Body of pancreas (tissue), 4 donors: ENCODE measurements at regions of chr4 and their contacts with region 1.

Region 1: GRCh38 chr4:168924667-168925066 is 85.4 kb downstream of the CBR4 start:
- DNase-seq: no peak
- ATAC-seq: no peak
- H3K4me3 ChIP-seq: no peak overlapping the region
- H3K27ac ChIP-seq: no peak overlapping the region
- H3K4me1 ChIP-seq: no peaks in the 10 kb centered on the region
- H3K27me3 ChIP-seq: no peaks in the 10 kb centered on the region
- CTCF ChIP-seq: no peak
- POLR2A ChIP-seq: no peak

Region 2: GRCh38 chr4:169485791-169486742 is 561.4 kb after region 1 on chr4:
- intact Hi-C with region 1: loop called (anchors 5 kb)
- DNase-seq: peak; percentile 19 to 47 (median 34)
- ATAC-seq: peak; percentile 66
- H3K4me3 ChIP-seq: no peak overlapping the region
- H3K27ac ChIP-seq: no peak overlapping the region
- H3K4me1 ChIP-seq: no peaks in the 10 kb centered on the region
- H3K27me3 ChIP-seq: no peaks in the 10 kb centered on the region
- CTCF ChIP-seq: peak in 6 of 7 experiments; percentile 27 to 79 (median 66)
- POLR2A ChIP-seq: no peak